Activated naive CD4-positive, alpha-beta T cell treated with anti-CD3 and anti-CD28 coated beads for 36 hours (primary cell): ENCODE measurements at regions of chr12 and their contacts with region 1.

Region 1: DNA sequence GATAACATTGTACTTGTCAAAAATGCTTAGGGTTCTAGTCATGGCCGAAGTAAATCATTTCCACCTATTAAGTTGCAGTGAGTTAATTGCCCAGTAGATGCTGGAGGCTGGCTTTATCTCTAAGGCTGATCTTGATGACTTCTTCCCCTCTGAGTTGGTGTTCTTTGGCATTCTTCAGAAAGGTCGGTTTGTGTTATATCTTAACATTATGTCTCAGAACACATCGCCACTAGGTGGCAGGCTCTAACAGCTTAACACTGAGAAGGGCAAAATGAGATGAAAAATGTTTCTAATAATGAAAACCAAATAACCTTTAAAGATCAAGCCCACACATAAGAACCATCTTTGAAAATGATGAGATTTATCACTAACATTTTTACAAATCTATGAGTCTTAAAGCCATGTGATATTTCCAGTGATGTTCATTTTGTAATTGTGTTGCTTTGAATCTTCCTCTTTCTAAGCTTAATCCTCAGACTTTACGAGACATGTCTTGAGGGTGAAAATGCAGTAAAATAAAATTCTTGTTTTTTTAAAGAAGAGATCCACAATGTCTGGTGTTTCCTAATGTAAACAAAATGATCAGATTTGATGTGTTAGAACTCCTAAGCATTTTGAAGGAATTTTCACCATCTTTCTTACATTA is 28.6 kb downstream of the SUDS3 start:
- DNase-seq: peak; percentile 81
- H3K4me3 Mint-ChIP-seq: no peak overlapping the region
- H3K27ac Mint-ChIP-seq: no peak overlapping the region
- H3K4me1 Mint-ChIP-seq: no peaks in the 10 kb centered on the region
- H3K27me3 Mint-ChIP-seq: no peaks in the 10 kb centered on the region

Region 2: DNA sequence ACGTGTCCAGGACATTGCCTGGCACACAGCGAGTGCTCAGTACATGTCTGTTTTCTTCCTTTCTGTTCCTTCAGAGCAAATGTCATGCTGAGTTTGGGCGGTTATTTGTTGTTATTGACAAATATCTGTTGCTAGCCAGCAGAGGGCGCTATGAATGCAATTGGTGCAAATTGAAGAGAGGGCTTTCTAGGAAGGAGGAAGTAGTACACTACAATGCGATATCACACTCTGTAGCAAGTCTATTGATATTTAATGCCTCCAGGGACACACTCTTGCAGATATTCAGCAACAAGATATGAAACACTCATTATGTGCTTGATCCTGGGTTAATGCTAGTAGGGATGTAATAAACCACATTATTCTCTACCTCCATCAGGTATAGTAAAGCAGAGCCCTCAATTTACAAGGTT is 309.1 kb after region 1 on chr12:
- CTCF ChIA-PET with region 1: no interaction called
- intact Hi-C with region 1: loop called (anchors 5 kb)
- DNase-seq: peak; percentile 43
- H3K4me3 Mint-ChIP-seq: no peak overlapping the region
- H3K27ac Mint-ChIP-seq: no peak overlapping the region
- H3K4me1 Mint-ChIP-seq: no peaks in the 10 kb centered on the region
- H3K27me3 Mint-ChIP-seq: no peaks in the 10 kb centered on the region

Region 3: GRCh38 chr12:118790578-118790977 is 385.6 kb after region 1 on chr12:
- CTCF ChIA-PET with region 1: no interaction called
- intact Hi-C with region 1: no loop called
- DNase-seq: no peak
- H3K4me3 Mint-ChIP-seq: no peak overlapping the region
- H3K27ac Mint-ChIP-seq: no peak overlapping the region
- H3K4me1 Mint-ChIP-seq: no peaks in the 10 kb centered on the region
- H3K27me3 Mint-ChIP-seq: no peaks in the 10 kb centered on the region

Region 4: DNA sequence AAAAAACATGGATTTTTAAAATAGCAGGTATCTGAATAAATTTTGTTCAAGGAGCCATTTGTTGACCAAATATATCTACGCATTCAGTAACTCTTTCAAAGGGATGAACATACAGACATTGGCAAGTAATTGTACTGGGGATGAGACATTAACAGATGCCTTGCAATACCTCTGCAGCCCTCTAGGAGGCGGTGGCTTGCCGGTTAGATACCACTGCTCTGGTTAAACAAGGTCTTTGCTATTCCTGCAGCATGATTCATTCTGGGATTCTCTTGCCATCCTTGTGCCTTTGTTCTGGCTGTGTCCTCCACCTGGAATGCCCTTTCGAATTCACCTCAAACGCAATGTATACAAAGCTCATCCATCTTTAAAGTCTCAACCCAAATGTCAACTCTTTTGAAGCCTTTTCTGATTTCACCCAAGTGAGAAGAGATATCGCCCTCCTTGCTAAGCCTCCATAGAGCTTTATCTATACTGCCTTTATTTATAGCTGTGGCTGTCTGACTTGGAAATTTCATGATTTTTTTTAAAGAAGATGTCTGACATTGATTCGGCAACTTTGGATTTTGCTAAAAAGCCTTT is 445.3 kb after region 1 on chr12:
- CTCF ChIA-PET with region 1: interaction called, 4 read pairs
- intact Hi-C with region 1: loop called (anchors 1 kb)
- DNase-seq: peak; percentile 28
- H3K4me3 Mint-ChIP-seq: no peak overlapping the region
- H3K27ac Mint-ChIP-seq: no peak overlapping the region
- H3K4me1 Mint-ChIP-seq: no peaks in the 10 kb centered on the region
- H3K27me3 Mint-ChIP-seq: peaks cover 2% of the 10 kb centered on the region

Region 5: DNA sequence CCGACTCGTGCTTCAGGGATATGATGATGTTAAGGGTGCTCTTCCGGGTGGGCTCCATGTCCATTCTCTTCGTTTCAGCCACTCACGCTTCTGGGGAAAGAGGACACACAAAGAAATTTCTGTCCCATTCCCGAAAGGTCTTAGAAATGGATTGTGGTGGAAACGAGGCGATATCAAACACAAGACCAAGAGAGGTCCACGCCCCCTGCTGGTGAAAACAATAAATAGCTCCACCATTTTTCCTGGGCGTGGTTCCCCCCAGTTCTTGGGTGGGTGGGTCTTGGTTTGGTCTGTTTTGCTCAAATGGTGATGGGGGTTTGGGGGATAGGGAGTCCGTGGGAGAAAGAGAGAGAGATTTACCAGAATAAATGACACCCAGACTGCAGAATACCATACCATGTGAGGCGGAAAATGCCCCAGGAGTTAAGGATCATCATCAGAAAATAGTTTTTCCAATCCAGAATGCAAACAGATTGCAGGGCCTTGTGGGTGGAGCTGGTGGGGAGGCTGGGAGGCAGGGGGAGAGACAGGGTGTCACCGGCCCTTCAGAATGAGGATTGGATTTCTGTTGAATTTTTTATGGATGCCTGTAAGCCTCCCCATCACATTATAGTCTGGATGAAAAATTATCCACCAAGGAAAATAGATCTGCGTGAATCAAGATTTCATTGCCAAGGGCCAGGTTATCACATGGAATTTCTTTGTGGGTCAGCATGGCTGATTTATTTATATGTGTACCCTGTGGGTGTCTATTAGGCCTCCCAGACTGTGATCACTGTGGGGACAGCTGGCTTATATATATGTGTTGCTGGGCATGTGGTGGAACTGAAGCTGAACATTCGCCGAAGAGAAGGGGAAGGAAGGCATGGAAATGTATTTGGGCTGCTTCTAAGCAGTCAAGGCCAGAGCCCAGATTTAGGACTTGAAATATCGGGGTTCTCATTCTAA is 632.2 kb after region 1 on chr12:
- CTCF ChIA-PET with region 1: no interaction called
- intact Hi-C with region 1: loop called (anchors 1 kb)
- DNase-seq: peak; percentile 15
- H3K4me3 Mint-ChIP-seq: no peak overlapping the region
- H3K27ac Mint-ChIP-seq: no peak overlapping the region
- H3K4me1 Mint-ChIP-seq: no peaks in the 10 kb centered on the region
- H3K27me3 Mint-ChIP-seq: no peaks in the 10 kb centered on the region

Region 6: DNA sequence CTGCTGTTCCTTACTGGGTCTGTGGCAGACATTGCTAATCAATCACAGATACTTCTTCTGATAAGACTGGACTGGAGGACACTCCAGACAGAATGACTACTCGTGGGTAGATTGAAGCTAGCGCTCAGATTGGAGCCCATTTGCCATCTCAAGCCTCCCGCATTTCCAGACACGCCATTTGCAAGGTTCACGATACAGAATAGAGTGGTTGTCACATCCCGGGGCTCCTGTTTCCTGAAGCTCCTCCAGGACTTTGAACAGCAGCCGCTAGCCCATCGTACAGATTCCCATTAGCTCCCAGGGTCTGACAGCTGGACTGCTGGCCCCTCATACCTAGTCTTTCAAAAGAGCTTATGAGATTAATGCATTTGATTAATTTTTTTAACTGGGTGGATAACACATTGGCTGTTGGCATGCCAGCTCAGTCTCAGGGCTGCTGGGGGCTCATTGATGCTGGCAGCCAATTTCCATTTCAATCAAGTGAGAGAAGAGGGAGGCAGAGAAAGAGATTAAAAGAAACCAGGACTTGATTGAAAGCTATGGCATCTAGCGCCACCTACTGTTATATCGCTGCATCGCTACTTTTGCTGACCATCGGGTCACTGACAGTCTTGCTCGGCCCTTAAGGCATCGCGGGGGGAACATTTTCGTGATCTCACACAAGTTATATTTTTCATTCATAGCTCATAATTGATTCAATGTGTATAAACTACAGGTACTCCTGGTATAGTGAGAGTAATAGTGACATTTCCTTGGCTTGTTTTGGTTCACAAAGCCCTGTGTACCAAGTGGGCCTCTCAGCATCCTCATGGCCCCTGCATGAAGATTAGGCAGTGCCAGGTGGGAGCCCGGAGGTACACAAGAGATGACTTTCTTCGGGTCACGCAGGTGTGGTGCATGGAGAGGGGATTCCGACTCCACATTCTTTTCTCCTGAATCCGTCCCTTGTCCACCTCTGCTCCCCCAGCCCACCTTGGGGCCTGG is 1008.1 kb after region 1 on chr12:
- CTCF ChIA-PET with region 1: no interaction called
- intact Hi-C with region 1: loop called (anchors 1 kb)
- DNase-seq: peak; percentile 62
- H3K4me3 Mint-ChIP-seq: no peak overlapping the region
- H3K27ac Mint-ChIP-seq: no peak overlapping the region
- H3K4me1 Mint-ChIP-seq: no peaks in the 10 kb centered on the region
- H3K27me3 Mint-ChIP-seq: peaks cover 8% of the 10 kb centered on the region

Region 7: GRCh38 chr12:119544765-119545625 is 1140.0 kb after region 1 on chr12:
- CTCF ChIA-PET with region 1: no interaction called
- intact Hi-C with region 1: loop called (anchors 5 kb)
- DNase-seq: peak; percentile 73
- H3K4me3 Mint-ChIP-seq: no peak overlapping the region
- H3K27ac Mint-ChIP-seq: no peak overlapping the region
- H3K4me1 Mint-ChIP-seq: no peaks in the 10 kb centered on the region
- H3K27me3 Mint-ChIP-seq: peaks cover 28% of the 10 kb centered on the region

Region 8: GRCh38 chr12:119649202-119649808 is 1244.3 kb after region 1 on chr12:
- CTCF ChIA-PET with region 1: no interaction called
- intact Hi-C with region 1: loop called (anchors 2 kb)
- DNase-seq: no peak
- H3K4me3 Mint-ChIP-seq: no peak overlapping the region
- H3K27ac Mint-ChIP-seq: no peak overlapping the region
- H3K4me1 Mint-ChIP-seq: no peaks in the 10 kb centered on the region
- H3K27me3 Mint-ChIP-seq: no peaks in the 10 kb centered on the region